Activated CD4-positive, alpha-beta memory T cell treated with anti-CD3 and anti-CD28 coated beads for 36 hours (primary cell): ENCODE measurements at regions of chr3 and their contacts with region 1.

Region 1: GRCh38 chr3:45760878-45761711 is 35.2 kb downstream of the SLC6A20 start:
- DNase-seq: peak; percentile 53
- H3K4me3 Mint-ChIP-seq: no peak overlapping the region
- H3K27ac Mint-ChIP-seq: no peak overlapping the region
- H3K4me1 Mint-ChIP-seq: no peaks in the 10 kb centered on the region
- H3K27me3 Mint-ChIP-seq: no peaks in the 10 kb centered on the region

Region 2: DNA sequence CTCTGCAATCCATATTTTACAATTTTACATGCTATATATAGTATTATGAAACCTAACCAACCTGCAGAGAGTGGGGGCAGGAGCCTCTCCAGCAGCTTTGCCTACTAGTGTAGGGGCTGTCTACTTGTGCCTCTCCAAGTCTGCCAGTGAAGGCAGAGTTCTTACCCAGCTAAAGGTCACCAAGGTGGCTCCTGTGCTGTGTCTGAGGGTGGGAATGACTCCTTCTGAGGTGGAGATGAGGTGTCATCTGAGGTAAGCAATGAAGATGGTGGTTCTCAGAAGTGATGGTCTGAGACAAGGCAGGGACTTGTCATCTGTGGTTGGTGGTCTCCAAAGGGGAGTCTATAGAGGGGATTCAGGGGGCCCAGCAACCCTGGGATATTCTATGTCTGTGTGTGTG is 24.4 kb before region 1 on chr3:
- CTCF ChIA-PET with region 1: no interaction called
- POLR2A ChIA-PET with region 1: no interaction called
- intact Hi-C with region 1: no loop called
- DNase-seq: peak; percentile 20
- H3K4me3 Mint-ChIP-seq: no peak overlapping the region
- H3K27ac Mint-ChIP-seq: peak overlapping the region; percentile 16
- H3K4me1 Mint-ChIP-seq: peaks cover 29% of the 10 kb centered on the region
- H3K27me3 Mint-ChIP-seq: no peaks in the 10 kb centered on the region

Region 3: GRCh38 chr3:45746777-45747622 is 14.1 kb before region 1 on chr3:
- CTCF ChIA-PET with region 1: interaction called, 28 read pairs
- POLR2A ChIA-PET with region 1: no interaction called
- intact Hi-C with region 1: no loop called
- DNase-seq: no peak
- H3K4me3 Mint-ChIP-seq: no peak overlapping the region
- H3K27ac Mint-ChIP-seq: no peak overlapping the region
- H3K4me1 Mint-ChIP-seq: peaks cover 5% of the 10 kb centered on the region
- H3K27me3 Mint-ChIP-seq: no peaks in the 10 kb centered on the region

Region 4: DNA sequence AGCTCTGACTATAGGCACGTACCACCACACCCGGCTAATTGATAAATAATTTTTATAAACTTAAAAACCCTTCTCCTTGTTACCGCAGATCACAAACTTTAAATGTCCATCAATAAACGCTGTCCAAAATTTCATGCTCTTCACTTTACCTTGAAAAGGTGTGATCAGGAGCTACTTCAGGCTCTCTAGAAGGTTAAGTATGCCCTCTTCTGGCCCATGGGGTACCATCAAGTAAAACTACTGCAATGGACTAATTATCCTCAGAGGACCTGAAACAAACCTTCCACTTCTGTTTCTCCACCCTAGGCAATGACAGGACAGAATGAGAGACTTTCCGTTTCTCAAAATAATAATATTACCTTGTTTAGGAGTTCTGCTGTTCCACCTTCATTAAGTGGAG is 71.6 kb after region 1 on chr3:
- CTCF ChIA-PET with region 1: interaction called, 7 read pairs
- POLR2A ChIA-PET with region 1: no interaction called
- intact Hi-C with region 1: loop called (anchors 1 kb)
- DNase-seq: no peak
- H3K4me3 Mint-ChIP-seq: no peak overlapping the region
- H3K27ac Mint-ChIP-seq: no peak overlapping the region
- H3K4me1 Mint-ChIP-seq: peaks cover 3% of the 10 kb centered on the region
- H3K27me3 Mint-ChIP-seq: no peaks in the 10 kb centered on the region

Region 5: GRCh38 chr3:45929042-45929679 is 168.1 kb after region 1 on chr3:
- CTCF ChIA-PET with region 1: interaction called, 112 read pairs
- POLR2A ChIA-PET with region 1: no interaction called
- intact Hi-C with region 1: loop called (anchors 1 kb)
- DNase-seq: peak; percentile 76
- H3K4me3 Mint-ChIP-seq: no peak overlapping the region
- H3K27ac Mint-ChIP-seq: no peak overlapping the region
- H3K4me1 Mint-ChIP-seq: no peaks in the 10 kb centered on the region
- H3K27me3 Mint-ChIP-seq: no peaks in the 10 kb centered on the region

Region 6: DNA sequence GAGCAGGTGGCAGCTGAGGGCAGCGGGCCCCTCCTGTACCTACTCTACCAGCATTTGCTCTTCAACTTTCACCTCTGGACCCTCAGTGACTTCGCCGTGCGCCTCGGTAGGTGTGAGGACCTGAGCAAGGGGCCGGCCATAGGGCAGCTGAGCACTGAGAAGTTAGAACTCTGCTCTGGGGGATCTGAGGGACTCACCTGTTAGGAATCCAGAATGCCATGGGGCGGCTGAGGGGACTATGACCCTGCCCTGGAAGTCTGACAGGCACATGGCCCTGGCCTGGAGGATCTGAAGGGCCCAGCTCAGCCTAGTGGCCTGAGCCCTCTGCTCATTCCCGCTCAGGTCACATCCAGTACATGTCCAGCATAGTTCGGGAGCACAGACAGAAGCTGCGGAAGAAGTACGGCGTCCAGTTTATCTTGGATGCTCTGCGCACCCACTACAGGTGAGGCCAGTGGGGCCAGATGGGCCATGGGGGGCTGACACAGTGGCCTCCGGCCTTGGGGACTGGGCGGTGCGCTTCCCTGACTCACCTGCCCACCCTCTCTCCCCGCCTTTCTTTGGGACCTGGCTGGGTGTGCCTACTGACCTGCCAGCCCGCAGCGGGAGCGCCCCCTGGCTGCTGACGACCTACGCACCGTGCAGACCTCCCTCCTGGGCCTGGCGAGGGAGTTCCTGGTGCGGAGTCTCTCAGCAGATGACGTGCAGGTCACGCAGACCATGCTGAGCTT is 1237.2 kb after region 1 on chr3:
- CTCF ChIA-PET with region 1: no interaction called
- POLR2A ChIA-PET with region 1: no interaction called
- intact Hi-C with region 1: no loop called
- DNase-seq: peak; percentile 82
- H3K4me3 Mint-ChIP-seq: no peak overlapping the region
- H3K27ac Mint-ChIP-seq: peak overlapping the region; percentile 66
- H3K4me1 Mint-ChIP-seq: peaks cover 17% of the 10 kb centered on the region
- H3K27me3 Mint-ChIP-seq: no peaks in the 10 kb centered on the region